Sigmoid colon (tissue), 7 donors: ENCODE measurements at regions of chr9 and their contacts with region 1.

Region 1: DNA sequence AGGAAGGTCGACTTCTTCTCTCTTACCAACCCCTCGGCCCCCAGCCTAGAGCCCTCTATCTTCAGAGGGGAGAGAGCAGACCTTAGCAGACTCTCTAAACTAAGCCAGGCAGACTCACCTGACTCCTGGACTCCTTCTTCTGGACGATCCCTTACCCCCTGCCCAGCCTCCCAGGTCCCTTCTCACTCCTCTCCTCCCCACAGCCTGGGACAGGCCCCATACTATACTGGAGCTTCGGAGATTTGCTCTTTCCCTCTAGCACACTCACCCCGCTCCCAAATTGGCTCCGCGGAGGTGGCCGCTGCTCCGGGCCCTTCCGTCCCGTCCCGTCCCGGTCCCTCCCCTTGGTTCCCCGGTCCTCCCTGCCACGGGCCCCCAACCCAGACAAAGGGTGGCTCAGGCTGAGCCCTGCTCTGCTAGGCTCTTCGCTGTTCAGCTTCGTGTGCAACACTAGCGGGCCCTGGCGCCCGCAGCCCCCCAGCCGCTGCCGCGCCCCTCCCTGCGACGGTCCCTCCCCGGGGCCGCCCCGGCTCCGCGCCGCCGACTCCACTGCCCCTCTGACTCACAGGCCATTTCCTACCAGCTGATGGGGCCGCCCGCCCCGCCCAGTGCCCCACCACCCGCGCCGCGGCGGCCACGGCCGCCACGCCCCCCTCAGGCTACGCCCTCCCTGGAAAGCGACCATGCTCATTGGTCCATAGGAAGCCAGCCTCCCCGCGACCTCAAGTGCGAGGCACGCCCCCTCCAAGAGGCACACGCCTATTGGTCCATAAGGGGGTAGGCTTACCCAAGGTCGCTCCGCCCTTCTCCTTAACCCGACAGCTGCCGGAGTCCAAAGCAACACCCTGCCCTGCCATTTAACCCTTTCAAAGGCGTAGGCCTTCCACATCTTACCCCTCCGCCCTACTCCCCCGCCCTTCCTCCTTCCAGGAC is 4.4 kb downstream of the ATOSB start:
- DNase-seq: peak; percentile 99
- H3K4me3 ChIP-seq: peak overlapping the region; percentile 58 to 87 (median 72)
- H3K27ac ChIP-seq: peak overlapping the region; percentile 90 to 96 (median 92)
- H3K4me1 ChIP-seq: peaks cover 0 to 60% (median 52%) of the 10 kb centered on the region in 4 donors
- H3K27me3 ChIP-seq: no peaks in the 10 kb centered on the region
- CTCF ChIP-seq: no peak
- EP300 ChIP-seq: no peak
- POLR2A ChIP-seq: peak in 1 of 2 donors; percentile 19

Region 2: DNA sequence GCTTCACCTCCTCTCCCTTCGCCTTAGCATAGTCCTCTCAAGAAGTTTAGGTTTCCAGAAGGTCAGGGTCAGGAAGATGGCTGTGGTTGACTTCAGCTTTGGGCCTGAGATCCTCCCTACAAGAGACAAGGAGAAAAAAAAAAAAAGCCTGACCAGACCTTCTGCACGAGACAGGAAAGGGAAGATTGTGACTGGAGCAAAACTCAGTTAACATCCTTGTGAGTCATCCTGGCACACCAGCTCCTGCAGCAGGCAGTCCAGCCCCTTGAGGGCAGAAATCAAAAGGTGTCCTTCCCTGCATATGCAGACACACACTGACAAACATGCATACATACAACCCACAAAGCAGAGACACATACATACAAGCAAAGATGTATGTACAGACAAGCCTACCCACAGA is 570.4 kb before region 1 on chr9:
- intact Hi-C with region 1: no loop called
- DNase-seq: peak; percentile 25
- H3K4me3 ChIP-seq: no peak overlapping the region
- H3K27ac ChIP-seq: no peak overlapping the region
- H3K4me1 ChIP-seq: no peaks in the 10 kb centered on the region
- H3K27me3 ChIP-seq: peaks cover 0 to 10% (median 0%) of the 10 kb centered on the region in 3 donors
- CTCF ChIP-seq: no peak
- EP300 ChIP-seq: no peak
- POLR2A ChIP-seq: no peak

Region 3: GRCh38 chr9:34994260-34994899 is 116.9 kb before region 1 on chr9:
- intact Hi-C with region 1: loop called (anchors 5 kb)
- DNase-seq: no peak
- H3K4me3 ChIP-seq: peak overlapping the region in 2 of 4 donors; percentile 5 to 18
- H3K27ac ChIP-seq: peak overlapping the region in 3 of 4 donors; percentile 95 to 100 (median 98)
- H3K4me1 ChIP-seq: peaks cover 0 to 77% (median 72%) of the 10 kb centered on the region in 4 donors
- H3K27me3 ChIP-seq: no peaks in the 10 kb centered on the region
- CTCF ChIP-seq: peak; percentile 48 to 66 (median 60)
- EP300 ChIP-seq: no peak
- POLR2A ChIP-seq: no peak

Region 4: DNA sequence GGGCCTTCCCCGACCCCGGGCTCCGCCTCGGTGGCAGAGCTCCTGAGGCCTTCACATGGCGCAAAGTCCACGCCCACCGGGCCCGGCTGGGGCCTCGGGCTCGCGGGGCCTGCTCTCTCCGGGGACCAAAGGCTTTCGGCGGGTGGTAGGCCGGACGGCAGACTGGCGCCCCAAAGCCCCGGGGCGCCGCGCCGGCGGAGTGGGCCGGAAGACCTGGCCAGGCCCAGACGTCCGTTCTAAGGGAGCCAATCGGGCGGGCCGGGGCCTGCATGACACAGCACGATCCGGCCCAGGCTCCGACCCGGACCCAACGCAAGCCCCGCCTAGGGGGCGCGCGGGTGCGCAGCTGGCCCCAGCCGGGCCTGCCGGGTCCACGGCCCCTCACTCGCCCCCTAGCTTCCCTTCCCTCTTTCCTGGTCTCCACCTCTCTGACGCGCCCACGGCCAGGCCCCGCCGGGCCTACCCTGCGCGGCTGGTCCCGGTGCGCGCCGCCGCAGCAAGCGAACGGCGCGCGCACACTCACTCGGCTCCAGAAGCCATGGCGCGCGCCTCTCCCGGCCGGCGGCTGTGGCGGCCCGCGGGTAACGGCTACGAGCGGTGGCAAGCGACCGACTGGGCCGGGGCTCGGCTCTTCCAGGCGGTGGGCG is 39.3 kb before region 1 on chr9:
- intact Hi-C with region 1: loop called (anchors 5 kb)
- DNase-seq: peak; percentile 94
- H3K4me3 ChIP-seq: peak overlapping the region; percentile 80 to 100 (median 90)
- H3K27ac ChIP-seq: peak overlapping the region; percentile 99 to 100 (median 100)
- H3K4me1 ChIP-seq: peaks cover 0 to 47% (median 33%) of the 10 kb centered on the region in 4 donors
- H3K27me3 ChIP-seq: no peaks in the 10 kb centered on the region
- CTCF ChIP-seq: no peak
- EP300 ChIP-seq: no peak
- POLR2A ChIP-seq: peak in 1 of 2 donors; percentile 11